ENCODE measurements at regions of chr21 and their contacts with region 1.

Region 1: GRCh38 chr21:27713154-27714109 is 746.5 kb upstream of the ADAMTS5 start:
- DNase-seq: no peak
- H3K4me3 ChIP-seq: no peak overlapping the region
- H3K27ac ChIP-seq: no peak overlapping the region
- H3K4me1 ChIP-seq: no peaks in the 10 kb centered on the region
- H3K27me3 ChIP-seq: no peaks in the 10 kb centered on the region
- CTCF ChIP-seq: no peak

Region 2: GRCh38 chr21:28704746-28705145 is 991.3 kb after region 1 on chr21:
- CTCF ChIA-PET with region 1: no interaction called
- POLR2A ChIA-PET with region 1: interaction called, 12 read pairs
- intact Hi-C with region 1: no loop called
- DNase-seq: no peak
- H3K4me3 ChIP-seq: no peak overlapping the region
- H3K27ac ChIP-seq: no peak overlapping the region
- H3K4me1 ChIP-seq: no peaks in the 10 kb centered on the region
- H3K27me3 ChIP-seq: no peaks in the 10 kb centered on the region
- CTCF ChIP-seq: no peak

Measured in PC-9 (cell line).